H1 (cell line): ENCODE measurements at regions of chr3 and their contacts with region 1.

Region 1: DNA sequence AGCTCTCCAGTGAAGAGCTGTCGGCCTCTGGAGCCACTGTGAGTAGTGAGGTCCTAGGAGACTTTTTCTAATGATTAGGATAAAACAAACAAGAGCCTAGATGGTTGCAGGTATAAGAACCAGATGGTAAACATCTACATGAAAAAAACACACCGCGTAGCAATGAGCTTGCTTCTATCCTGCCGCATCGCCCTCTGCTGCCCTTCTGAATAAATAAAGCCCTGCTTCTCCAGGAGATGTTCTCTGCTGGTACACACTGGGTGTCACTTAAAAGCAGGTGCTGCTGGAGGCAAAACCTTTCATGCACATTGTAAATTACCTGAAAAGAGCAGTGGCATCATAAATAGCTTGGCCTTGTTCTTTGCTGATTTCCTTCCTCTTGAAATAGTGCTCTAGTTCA is 164.4 kb upstream of the TOPAZ1 start:
- DNase-seq: no peak
- H3K4me3 ChIP-seq: no peak overlapping the region; a peak in 1 of 8 replicates
- H3K27ac ChIP-seq: no peak overlapping the region
- H3K4me1 ChIP-seq: peaks cover 0 to 12% (median 9%) of the 10 kb centered on the region in 4 experiments
- H3K27me3 ChIP-seq: no peaks in the 10 kb centered on the region; a peak in 1 of 7 replicates
- CTCF ChIP-seq: peak; percentile 9 to 39 (median 28); a peak in 3 of 4 replicates
- EP300 ChIP-seq: no peak
- POLR2A ChIP-seq: no peak
- RAD21 ChIP-seq: peak; percentile 17 to 51; a peak in 3 of 4 replicates

Region 2: DNA sequence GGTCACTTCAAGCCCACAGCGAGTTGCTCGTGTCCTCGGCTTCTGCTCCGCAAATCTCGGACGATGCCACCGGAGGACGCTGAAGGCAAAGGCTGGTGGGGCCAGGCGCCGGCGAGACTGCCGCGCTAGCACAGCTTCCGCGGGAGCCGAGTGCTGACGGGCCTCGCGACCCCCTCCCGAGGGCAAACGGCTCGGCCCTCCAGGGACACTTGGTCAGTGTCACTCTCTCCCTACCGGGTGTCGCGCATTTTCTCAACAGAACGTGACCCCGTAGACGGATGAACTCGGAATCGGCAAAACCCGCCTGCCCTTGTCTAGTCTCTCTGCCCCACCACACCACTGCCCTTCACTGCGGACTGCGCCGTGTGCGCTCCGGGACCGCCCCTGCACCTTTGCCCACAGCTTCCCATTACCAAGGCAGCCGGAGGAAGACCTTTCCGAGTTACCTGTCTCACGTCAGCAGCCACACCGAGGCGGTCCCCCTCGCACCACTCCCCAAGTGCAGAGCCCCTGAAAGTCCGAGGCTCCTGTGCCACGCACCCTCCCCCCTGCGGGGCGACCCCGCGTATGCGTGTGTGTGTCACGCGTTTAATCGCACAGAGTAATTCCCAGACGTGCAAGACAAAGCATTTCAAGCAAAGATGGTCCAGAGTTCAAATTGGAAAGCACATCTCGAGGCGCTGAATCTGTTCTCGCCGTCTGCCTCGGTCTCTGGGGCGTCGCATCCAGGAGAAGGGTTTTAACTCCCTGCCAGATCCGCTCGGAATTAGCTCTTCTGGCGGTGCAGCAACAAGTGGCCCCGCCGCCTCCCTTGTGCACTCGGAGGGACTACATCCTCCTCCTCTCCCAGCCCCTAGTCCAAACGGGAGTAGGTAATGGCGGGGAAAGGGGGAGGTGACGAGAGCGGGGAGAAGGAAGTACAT is 80.6 kb before region 1 on chr3:
- CTCF ChIA-PET with region 1: interaction called, 14 read pairs
- POLR2A ChIA-PET with region 1: interaction called, 3 read pairs
- DNase-seq: peak in 1 of 2 experiments; percentile 74
- H3K4me3 ChIP-seq: peak overlapping the region; percentile 48 to 75 (median 65)
- H3K27ac ChIP-seq: no peak overlapping the region
- H3K4me1 ChIP-seq: peaks cover 0 to 31% (median 17%) of the 10 kb centered on the region in 4 experiments; a peak in 6 of 7 replicates
- H3K27me3 ChIP-seq: peaks cover 40 to 73% (median 67%) of the 10 kb centered on the region in 4 experiments
- CTCF ChIP-seq: peak in 2 of 3 experiments; percentile 32 to 45; a peak in 3 of 4 replicates
- EP300 ChIP-seq: no peak
- POLR2A ChIP-seq: no peak
- RAD21 ChIP-seq: peak; percentile 54 to 77

Region 3: DNA sequence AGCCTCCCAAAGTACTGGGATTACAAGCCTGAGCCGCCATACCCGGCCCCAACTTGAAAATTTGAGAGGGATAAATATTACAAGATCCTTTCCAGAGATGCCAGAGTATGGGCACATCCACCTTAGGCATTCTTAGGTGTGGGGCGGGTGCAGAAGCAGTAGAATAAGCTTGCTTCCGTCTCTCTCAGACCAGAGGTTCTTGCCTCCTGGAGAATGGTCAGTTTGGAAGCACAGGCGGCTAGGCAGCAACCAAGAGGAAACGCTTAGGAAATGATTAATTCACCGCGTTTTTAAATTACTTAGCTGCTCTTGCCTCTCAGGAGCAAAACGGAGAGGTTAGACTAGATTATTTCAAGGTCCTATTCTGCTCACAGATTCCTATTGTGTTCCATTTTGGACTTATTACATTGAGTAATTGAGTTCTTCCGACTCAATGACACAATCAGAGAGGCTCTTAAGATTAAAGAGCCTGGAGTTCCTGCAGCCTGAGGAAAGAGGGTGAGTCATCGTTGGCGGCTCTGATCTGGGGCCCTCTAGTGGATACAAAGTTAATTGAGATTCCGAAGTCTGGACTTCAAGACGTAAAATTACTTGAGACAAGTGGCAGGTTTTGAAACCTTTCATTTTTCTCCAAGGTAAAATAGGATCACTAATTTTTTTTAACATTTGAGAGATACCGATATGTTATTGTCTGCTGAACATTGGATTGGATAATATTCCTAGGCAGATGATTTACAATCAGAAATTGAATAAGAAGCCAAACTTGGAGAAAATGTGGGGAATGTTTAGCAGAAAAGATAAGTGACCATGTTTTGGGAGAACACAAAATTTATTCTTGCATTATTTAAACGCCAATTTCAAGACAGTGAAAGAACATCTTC is 158.6 kb after region 1 on chr3:
- CTCF ChIA-PET with region 1: no interaction called
- POLR2A ChIA-PET with region 1: no interaction called
- DNase-seq: peak in 1 of 2 experiments; percentile 61
- H3K4me3 ChIP-seq: peak overlapping the region in 1 of 4 experiments; percentile 36; a peak in 2 of 8 replicates
- H3K27ac ChIP-seq: no peak overlapping the region
- H3K4me1 ChIP-seq: no peaks in the 10 kb centered on the region; a peak in 1 of 7 replicates
- H3K27me3 ChIP-seq: no peaks in the 10 kb centered on the region
- CTCF ChIP-seq: peak; percentile 35 to 68 (median 66)
- EP300 ChIP-seq: no peak
- POLR2A ChIP-seq: no peak
- RAD21 ChIP-seq: peak; percentile 54 to 70